PC-9 (cell line): ENCODE measurements at regions of chr1 and their contacts with region 1.

Region 1: DNA sequence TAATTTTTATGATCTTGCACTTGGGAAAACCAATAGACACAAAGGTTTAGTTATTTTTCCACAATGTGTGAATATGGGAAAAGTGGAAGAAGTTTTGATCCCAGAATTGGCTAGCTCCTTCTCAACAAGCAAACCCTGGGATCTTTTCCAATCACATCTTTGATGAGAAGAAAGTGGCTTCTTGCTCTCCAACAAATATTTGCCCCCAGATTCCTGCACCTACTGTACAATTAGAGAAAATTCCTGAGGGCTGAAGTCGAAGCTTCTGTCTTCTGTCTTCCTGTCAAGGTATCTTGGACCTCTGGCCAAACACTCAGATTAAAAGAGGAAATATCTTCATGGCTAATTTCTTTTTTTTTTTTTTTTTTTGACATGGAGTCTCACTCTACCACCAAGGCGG is 113.1 kb upstream of the SLC45A1 start:
- DNase-seq: peak in 1 of 2 experiments; percentile 76
- H3K4me3 ChIP-seq: no peak overlapping the region
- H3K27ac ChIP-seq: peak overlapping the region; percentile 100
- H3K4me1 ChIP-seq: peaks cover 73% of the 10 kb centered on the region
- H3K27me3 ChIP-seq: no peaks in the 10 kb centered on the region
- CTCF ChIP-seq: no peak

Region 2: DNA sequence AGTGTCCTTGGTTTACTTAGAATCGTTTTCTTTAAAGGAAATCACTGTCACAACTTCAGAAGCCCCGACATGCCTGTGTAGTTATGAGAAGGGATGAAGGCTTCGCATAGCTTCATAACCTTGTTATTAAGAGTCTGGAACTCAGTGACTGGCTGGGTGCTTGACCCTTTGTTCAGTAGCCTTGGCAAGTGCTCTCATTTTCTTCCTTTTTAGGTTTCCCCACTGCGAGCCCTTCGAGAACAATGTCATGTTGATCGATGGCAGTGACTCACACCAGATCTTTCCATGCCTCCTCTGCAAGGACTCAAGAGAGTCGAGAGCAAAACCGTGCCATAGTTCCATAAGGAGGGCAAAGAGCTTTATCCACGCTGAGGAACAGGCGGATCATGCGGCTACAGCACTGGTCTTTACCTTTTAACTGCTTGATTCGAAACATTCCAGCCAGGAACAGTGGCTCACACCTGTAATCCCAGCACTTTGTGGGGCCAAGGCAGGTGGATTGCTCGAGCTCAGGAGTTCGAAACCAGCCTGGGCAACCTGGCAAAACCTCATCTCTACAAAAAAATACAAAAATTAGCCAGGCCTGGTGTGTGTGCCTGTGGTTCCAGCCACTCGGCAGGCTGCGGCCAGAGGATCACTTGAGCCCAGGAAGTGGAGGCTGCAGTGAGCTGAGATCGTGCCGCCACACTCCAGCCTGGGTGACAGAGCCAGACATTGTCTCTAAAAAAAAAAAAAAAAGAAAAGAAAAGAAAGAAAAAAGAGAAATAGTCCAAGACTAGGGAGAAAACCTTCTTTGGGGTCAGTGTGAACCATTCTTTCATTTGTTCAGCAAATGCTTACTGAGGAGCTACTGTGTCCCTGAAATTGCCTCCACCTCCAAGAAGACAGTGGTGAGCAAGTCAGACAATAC is 83.3 kb before region 1 on chr1:
- CTCF ChIA-PET with region 1: no interaction called
- POLR2A ChIA-PET with region 1: interaction called, 10 read pairs
- intact Hi-C with region 1: loop called (anchors 5 kb)
- DNase-seq: peak; percentile 63 to 96
- H3K4me3 ChIP-seq: peak overlapping the region; percentile 28; the same call in 1 of the 2 replicates
- H3K27ac ChIP-seq: peak overlapping the region; percentile 100
- H3K4me1 ChIP-seq: peaks cover 78% of the 10 kb centered on the region
- H3K27me3 ChIP-seq: no peaks in the 10 kb centered on the region
- CTCF ChIP-seq: no peak

Region 3: GRCh38 chr1:8274352-8274751 is 69.5 kb after region 1 on chr1:
- CTCF ChIA-PET with region 1: no interaction called
- POLR2A ChIA-PET with region 1: interaction called, 16 read pairs
- intact Hi-C with region 1: no loop called
- DNase-seq: no peak
- H3K4me3 ChIP-seq: no peak overlapping the region
- H3K27ac ChIP-seq: no peak overlapping the region
- H3K4me1 ChIP-seq: peaks cover 6% of the 10 kb centered on the region
- H3K27me3 ChIP-seq: no peaks in the 10 kb centered on the region
- CTCF ChIP-seq: no peak

Region 4: DNA sequence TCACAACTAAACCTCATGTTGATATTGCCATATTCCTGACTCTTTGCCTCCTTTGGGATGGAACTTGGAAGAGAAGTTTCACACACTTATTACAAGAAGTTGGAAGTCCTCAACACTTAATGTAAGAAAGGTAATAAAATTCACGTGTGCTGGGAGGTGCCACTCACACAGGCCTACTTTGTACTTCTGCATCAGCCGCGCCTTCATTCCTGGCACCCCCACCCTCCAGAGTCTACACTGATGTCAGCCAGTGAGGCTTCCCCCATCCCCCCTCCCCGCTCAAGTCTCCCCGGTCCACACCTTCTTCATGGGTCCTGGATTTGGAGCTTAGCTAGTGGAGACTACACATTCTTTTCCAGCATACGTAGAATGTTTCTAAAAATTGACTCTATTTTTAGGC is 88.3 kb after region 1 on chr1:
- CTCF ChIA-PET with region 1: no interaction called
- POLR2A ChIA-PET with region 1: no interaction called
- intact Hi-C with region 1: no loop called
- DNase-seq: no peak
- H3K4me3 ChIP-seq: no peak overlapping the region
- H3K27ac ChIP-seq: no peak overlapping the region
- H3K4me1 ChIP-seq: no peaks in the 10 kb centered on the region
- H3K27me3 ChIP-seq: no peaks in the 10 kb centered on the region
- CTCF ChIP-seq: no peak

Region 5: GRCh38 chr1:8590526-8591351 is 385.9 kb after region 1 on chr1:
- CTCF ChIA-PET with region 1: no interaction called
- POLR2A ChIA-PET with region 1: no interaction called
- intact Hi-C with region 1: no loop called
- DNase-seq: no peak
- H3K4me3 ChIP-seq: no peak overlapping the region
- H3K27ac ChIP-seq: no peak overlapping the region
- H3K4me1 ChIP-seq: no peaks in the 10 kb centered on the region
- H3K27me3 ChIP-seq: no peaks in the 10 kb centered on the region
- CTCF ChIP-seq: no peak